ENCODE measurements at regions of chr17 and their contacts with region 1.

Region 1: DNA sequence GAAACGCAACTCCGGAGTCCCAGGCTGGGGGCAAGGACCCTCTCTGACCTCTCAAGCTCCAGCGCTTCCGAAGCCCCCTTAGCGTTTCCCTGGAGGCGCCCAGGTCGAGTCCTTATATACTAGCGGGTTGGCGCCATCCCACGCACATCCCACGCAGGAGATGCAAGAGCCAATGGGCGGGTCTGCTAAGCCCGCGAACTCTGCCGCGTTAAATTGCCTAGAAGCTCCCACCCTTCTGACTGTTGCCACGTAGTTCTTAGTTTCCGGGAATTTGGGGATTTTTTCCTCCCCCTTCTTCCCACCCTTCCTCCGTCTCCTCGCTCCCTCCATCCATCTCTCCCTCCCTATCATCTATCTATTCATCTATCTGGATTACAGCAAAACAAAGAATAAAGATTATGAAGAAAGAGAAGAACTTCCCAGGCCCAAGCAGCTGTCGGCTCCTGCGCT is at the start of gene SLFN11:
- DNase-seq: peak; percentile 95
- ATAC-seq: peak; percentile 71
- H3K4me3 Mint-ChIP-seq: peak within 1 kb of the TSS; percentile 91
- H3K27ac Mint-ChIP-seq: peak within 1 kb of the TSS; percentile 99
- H3K4me1 Mint-ChIP-seq: peaks cover 52% of the 10 kb centered on the region
- H3K27me3 Mint-ChIP-seq: no peaks in the 10 kb centered on the region
- CTCF ChIP-seq: no peak
- total RNA-seq, gene SLFN11: 95.8 to 106 TPM

Region 2: DNA sequence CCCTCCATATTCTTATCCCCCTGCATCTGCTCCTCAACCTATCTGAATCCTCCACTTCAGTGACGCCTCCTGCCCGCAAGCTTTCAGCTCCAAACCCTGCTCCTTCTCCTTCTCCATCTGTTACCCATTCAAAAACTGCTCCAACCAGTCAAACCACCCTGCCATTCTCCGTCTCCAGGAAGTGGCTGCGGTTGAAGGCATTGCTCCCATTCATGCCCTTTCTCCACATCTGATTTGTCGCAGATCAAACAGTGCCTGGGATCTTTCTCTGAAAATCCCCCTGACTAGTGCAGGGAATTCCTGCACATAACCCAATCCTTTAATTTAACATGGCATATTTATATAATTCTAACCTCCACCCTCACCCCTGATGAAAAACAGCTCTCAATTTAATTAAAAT is 74.4 kb before region 1 on chr17:
- CTCF ChIA-PET with region 1: no interaction called
- POLR2A ChIA-PET with region 1: no interaction called
- intact Hi-C with region 1: no loop called
- DNase-seq: no peak
- ATAC-seq: no peak
- H3K4me3 Mint-ChIP-seq: no peak overlapping the region
- H3K27ac Mint-ChIP-seq: no peak overlapping the region
- H3K4me1 Mint-ChIP-seq: peaks cover 6% of the 10 kb centered on the region
- H3K27me3 Mint-ChIP-seq: peaks cover 1% of the 10 kb centered on the region
- CTCF ChIP-seq: no peak

Region 3: DNA sequence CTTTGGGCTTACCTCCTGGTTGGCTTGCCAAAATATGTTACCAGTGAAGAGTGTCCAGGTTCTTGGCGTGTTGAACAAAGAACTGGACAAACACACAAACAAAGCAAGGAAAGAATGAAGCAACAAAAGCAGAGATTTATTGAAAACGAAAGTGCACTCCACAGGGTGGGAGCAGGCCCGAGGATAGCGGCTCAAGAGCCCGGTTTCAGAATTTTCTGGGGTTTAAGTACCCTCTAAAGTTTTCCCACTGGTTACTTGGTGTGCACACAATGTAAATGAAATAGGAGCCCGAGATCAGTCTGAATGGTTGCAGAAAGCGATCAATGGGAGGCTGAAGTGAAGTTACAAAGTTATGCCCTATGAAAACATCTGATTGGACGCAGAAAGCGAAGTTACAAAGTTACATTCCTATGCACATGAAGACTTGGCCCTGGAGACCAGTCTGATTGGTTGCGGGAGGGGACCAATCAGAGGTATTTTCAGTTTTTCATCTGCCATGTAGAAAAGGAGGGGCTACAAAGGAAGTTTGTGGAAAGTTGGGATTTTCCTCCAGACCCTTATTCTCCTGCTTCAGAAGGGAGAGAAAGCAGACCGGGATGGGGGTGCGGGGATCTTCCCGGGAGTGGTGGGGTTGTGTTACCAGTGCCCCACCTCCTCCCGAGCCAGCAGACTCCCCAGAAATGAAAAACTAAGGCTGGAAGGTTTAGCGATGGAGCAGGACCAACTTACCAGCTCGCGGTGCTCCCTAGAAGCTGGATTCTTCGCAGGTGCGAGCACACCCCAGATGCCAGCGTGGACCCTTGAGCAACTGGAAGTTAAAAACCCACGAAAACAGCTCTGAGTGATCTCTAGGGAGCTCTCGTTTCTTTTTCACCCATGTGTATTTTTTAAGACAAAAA is 58.9 kb after region 1 on chr17 and contains the start of gene SLFN12:
- CTCF ChIA-PET with region 1: no interaction called
- POLR2A ChIA-PET with region 1: interaction called, 16 read pairs
- intact Hi-C with region 1: no loop called
- DNase-seq: peak; percentile 61
- ATAC-seq: peak; percentile 77
- H3K4me3 Mint-ChIP-seq: peak within 1 kb of the TSS; percentile 89
- H3K27ac Mint-ChIP-seq: peak within 1 kb of the TSS; percentile 92
- H3K4me1 Mint-ChIP-seq: peaks cover 41% of the 10 kb centered on the region
- H3K27me3 Mint-ChIP-seq: no peaks in the 10 kb centered on the region
- CTCF ChIP-seq: no peak
- total RNA-seq, gene SLFN12: 5.1 to 6.3 TPM

Region 4: DNA sequence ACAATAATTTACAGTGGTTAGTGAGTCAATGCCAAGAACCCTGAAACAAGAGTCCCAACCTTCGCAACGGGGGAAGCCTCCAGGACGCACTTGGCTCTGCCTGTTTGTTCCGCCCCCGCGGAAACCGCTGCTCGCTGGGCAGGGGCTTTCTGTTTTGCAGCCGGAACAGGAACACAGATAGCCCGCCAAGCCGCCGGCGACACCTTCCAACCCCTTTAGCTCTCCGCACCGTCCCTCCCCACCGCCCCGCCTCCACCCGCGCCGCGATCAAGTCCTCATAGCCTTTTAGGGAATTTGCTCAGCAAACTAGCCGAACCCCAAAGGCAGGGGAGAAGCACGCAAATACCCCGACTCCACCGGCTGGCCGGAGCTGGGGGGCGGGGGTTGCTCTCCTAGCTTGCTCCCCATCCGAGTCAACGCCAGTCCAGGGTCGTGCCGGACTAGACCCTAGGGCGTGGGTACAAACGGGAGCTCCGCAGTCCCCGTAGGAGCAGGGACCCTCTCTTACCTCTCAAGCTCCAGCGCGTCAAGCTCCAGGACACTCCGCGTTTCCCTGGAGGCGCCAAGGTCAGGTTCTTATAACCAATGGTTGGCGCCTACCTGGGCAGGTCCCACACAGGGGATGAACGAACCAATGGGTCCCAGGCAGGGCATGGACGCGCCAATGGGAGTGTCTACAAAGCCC is 74.8 kb after region 1 on chr17 and contains the start of gene SLFN13:
- CTCF ChIA-PET with region 1: interaction called, 3 read pairs
- POLR2A ChIA-PET with region 1: interaction called, 12 read pairs
- intact Hi-C with region 1: no loop called
- DNase-seq: peak; percentile 99
- ATAC-seq: peak; percentile 96
- H3K4me3 Mint-ChIP-seq: peak within 1 kb of the TSS; percentile 65
- H3K27ac Mint-ChIP-seq: peak within 1 kb of the TSS; percentile 73
- H3K4me1 Mint-ChIP-seq: peaks cover 24% of the 10 kb centered on the region
- H3K27me3 Mint-ChIP-seq: no peaks in the 10 kb centered on the region
- CTCF ChIP-seq: no peak
- total RNA-seq, gene SLFN13: 39.9 to 41.8 TPM

Region 5: GRCh38 chr17:35529866-35530265 is 156.3 kb after region 1 on chr17:
- CTCF ChIA-PET with region 1: interaction called, 12 read pairs
- POLR2A ChIA-PET with region 1: interaction called, 66 read pairs
- intact Hi-C with region 1: loop called (anchors 5 kb)
- DNase-seq: peak; percentile 17
- ATAC-seq: peak; percentile 42
- H3K4me3 Mint-ChIP-seq: peak overlapping the region; percentile 67
- H3K27ac Mint-ChIP-seq: peak overlapping the region; percentile 83
- H3K4me1 Mint-ChIP-seq: peaks cover 69% of the 10 kb centered on the region
- H3K27me3 Mint-ChIP-seq: no peaks in the 10 kb centered on the region
- CTCF ChIP-seq: no peak

Measured in activated CD8-positive, alpha-beta T cell treated with anti-CD3 and anti-CD28 coated beads for 36 hours (primary cell).